AG04449 (cell line): ENCODE measurements at regions of chr19 and their contacts with region 1.

Region 1: DNA sequence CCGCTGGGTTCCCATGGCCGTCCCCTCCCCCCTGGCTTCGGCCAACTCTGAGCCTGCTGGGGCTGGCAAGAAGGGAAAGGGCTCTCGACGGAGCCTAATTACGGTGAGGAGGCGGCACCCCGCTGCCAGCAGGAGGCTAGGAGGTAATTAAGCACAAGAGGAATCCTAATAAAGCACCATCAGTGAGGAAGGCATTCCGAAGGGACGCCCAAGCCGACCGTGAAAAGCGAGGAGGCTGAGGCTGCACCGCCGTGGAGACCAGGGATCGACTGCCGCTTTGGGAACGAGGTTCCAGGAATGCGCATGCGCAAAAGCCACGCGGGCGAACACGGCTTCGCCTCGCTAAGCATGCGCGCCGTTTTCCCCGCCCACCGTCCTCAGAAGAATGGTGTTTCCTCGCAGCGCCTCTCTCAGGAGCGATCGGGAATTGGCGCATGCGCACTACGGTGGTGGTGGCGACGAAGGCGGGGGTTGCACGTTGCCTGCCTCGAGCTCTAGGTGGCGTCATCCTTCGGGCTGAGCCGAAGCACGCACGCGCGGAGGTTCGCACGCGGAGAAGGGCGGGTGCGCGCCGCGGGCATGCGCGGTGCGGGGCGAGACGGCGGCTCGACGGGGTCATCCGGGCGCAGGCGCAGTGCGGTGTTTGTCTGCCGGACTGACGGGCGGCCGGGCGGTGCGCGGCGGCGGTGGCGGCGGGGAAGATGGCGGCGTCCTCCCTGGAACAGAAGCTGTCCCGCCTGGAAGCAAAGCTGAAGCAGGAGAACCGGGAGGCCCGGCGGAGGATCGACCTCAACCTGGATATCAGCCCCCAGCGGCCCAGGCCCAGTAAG is at the start of gene MAP2K7:
- DNase-seq: peak; percentile 88
- H3K4me3 ChIP-seq: peak within 1 kb of the TSS; percentile 91
- CTCF ChIP-seq: peak; percentile 72

Region 2: GRCh38 chr19:7888145-7888825 is 15.2 kb before region 1 on chr19 and contains the start of gene LRRC8E:
- CTCF ChIA-PET with region 1: interaction called, 13 read pairs
- POLR2A ChIA-PET with region 1: interaction called, 7 read pairs
- DNase-seq: no peak
- H3K4me3 ChIP-seq: peak within 1 kb of the TSS; percentile 83
- CTCF ChIP-seq: no peak